ENCODE measurements at regions of chr5 and their contacts with region 1.

Region 1: DNA sequence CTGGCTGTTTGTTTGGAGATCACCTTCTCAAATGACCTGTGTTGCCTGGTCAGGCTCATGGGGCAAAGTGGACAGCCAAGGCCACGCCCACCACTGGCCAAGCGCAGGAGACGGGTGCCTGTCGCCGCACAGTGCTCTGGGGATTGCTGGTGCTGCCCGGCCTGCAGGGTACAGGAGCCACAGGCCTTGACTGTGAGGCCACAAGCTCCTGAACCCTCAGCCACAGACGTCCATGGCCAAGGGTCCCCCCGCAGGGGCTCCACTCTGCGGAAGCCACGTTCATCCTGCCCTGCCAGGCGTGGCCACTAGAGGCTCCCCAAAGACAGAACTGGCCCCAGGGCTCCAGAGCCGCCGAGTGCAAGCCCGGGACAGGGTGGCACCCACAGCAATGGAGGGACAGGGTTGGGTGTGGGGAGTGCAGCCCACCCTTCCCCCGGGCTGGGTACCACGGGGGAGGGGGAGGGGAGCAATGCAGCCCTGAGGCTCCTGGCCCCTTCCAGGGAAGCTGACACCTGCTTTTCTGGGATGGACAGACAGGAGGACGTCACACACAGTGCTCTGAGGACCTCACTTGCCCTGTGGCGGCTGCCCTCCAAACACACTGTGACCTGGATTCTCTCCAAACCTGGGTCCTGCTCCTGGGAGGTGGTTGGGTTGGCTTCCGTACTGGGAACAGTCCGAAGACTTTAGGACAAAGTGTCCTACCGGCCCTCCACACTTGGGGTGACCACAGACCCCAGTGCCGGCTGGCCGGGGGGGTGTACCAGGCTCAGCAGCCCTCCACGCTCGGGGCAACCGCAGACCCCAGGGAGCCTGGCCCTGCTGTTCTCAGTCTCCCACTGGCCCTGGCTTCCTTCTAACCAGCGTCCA is 21.5 kb downstream of the TPPP start:
- H3K4me3 ChIP-seq: no peak overlapping the region
- H3K27ac ChIP-seq: no peak overlapping the region
- H3K4me1 ChIP-seq: peaks cover 19% of the 10 kb centered on the region
- CTCF ChIP-seq: peak; percentile 86

Region 2: DNA sequence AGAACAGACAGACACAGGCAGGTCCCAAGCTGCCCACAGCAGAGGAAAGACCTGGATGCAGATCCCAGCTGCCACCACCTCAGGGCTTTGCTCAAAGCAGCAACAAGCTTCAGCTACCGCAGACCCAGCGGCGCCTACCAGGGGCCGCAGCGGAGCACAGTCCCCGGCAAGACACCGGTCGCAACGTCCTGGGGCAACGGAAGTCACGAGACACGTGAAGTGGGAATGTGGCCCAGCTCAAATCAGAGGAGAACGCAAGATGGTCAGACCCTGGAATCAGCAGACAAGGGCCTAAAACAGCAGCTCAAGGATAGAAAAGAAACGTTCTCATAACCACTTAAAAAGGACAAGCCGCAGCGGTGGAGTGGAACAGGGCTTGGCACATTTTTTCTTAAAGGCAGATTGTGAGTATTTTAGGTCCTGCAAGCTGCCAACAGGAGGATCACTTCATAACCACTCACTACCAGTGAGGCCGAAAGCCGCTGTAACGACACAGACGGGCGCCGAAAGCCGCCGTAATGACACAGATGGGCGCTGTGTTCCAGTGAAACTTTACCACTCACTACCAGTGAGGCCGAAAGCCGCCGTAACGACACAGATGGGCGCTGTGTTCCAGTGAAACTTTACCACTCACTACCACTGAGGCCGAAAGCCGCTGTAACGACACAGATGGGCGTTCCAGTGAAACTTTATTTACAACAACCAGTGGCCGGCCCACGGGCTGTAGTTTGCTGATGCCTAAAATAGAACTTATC is 169.2 kb before region 1 on chr5:
- CTCF ChIA-PET with region 1: no interaction called
- POLR2A ChIA-PET with region 1: no interaction called
- H3K4me3 ChIP-seq: no peak overlapping the region
- H3K27ac ChIP-seq: no peak overlapping the region
- H3K4me1 ChIP-seq: no peaks in the 10 kb centered on the region
- CTCF ChIP-seq: no peak

Region 3: GRCh38 chr5:657570-657969 is 14.1 kb before region 1 on chr5:
- CTCF ChIA-PET with region 1: interaction called, 19 read pairs
- POLR2A ChIA-PET with region 1: interaction called, 4 read pairs
- H3K4me3 ChIP-seq: no peak overlapping the region
- H3K27ac ChIP-seq: no peak overlapping the region
- H3K4me1 ChIP-seq: no peaks in the 10 kb centered on the region
- CTCF ChIP-seq: no peak

Region 4: GRCh38 chr5:691817-692528 is 20.3 kb after region 1 on chr5:
- CTCF ChIA-PET with region 1: no interaction called
- POLR2A ChIA-PET with region 1: interaction called, 11 read pairs
- H3K4me3 ChIP-seq: peak overlapping the region; percentile 44; the same call in 1 of the 2 replicates
- H3K27ac ChIP-seq: no peak overlapping the region
- H3K4me1 ChIP-seq: no peaks in the 10 kb centered on the region
- CTCF ChIP-seq: no peak

Region 5: GRCh38 chr5:902129-902916 is 230.6 kb after region 1 on chr5:
- CTCF ChIA-PET with region 1: interaction called, 39 read pairs
- POLR2A ChIA-PET with region 1: no interaction called
- H3K4me3 ChIP-seq: no peak overlapping the region
- H3K27ac ChIP-seq: no peak overlapping the region
- H3K4me1 ChIP-seq: no peaks in the 10 kb centered on the region
- CTCF ChIP-seq: no peak

Region 6: DNA sequence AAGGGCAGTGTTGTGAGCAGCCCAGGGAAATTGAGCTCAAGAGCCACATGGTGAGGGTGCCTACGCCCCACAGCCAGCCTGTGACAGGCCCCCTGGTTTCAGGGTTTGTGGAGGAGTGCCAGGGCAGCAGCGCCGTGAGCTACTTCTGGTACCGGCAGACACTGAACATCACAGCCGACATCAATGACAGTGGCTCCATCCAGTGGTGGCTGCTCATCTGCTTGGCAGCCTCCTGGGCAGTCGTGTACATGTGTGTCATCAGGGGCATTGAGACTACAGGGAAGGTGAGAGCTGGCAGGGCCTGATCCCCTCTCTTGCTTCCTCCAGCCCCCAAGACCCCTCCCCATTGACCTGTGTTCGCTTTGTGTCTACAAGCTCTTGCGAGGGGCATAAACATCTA is 563.7 kb after region 1 on chr5:
- CTCF ChIA-PET with region 1: no interaction called
- POLR2A ChIA-PET with region 1: interaction called, 13 read pairs
- H3K4me3 ChIP-seq: no peak overlapping the region
- H3K27ac ChIP-seq: no peak overlapping the region
- H3K4me1 ChIP-seq: no peaks in the 10 kb centered on the region
- CTCF ChIP-seq: no peak

Measured in HEK293 (cell line).